Ovary (tissue), 10 donors: ENCODE measurements at regions of chr10 and their contacts with region 1.

Region 1: GRCh38 chr10:21849607-21850006 is 153.9 kb downstream of the DNAJC1 start:
- DNase-seq: no peak
- H3K4me3 ChIP-seq: no peak overlapping the region
- H3K27ac ChIP-seq: no peak overlapping the region
- H3K4me1 ChIP-seq: no peaks in the 10 kb centered on the region
- H3K27me3 ChIP-seq: no peaks in the 10 kb centered on the region
- CTCF ChIP-seq: no peak
- EP300 ChIP-seq: no peak
- POLR2A ChIP-seq: no peak

Region 2: GRCh38 chr10:21702633-21703111 is 146.9 kb before region 1 on chr10:
- intact Hi-C with region 1: no loop called
- DNase-seq: no peak
- H3K4me3 ChIP-seq: no peak overlapping the region
- H3K27ac ChIP-seq: no peak overlapping the region
- H3K4me1 ChIP-seq: no peaks in the 10 kb centered on the region
- H3K27me3 ChIP-seq: no peaks in the 10 kb centered on the region
- CTCF ChIP-seq: no peak
- EP300 ChIP-seq: no peak
- POLR2A ChIP-seq: no peak

Region 3: DNA sequence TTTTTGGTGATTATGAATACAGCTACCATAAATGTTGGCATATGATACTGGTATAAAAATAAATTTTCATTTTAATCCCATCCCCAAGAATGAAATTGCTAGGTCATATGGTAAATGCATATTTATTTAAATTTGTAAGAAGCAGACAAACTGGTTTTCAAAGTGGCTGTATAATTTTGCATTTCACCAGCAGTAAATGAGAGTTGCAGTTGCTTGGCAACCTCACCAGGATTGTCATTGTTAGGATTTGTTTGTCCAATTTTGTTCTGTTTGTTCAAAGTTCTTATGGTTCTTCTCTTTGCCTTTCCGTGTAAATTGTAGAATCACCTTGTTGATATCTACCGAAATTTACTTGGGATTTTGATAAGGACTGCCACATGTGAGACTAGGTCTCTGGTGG is 1826.7 kb after region 1 on chr10:
- intact Hi-C with region 1: loop called in 1 of 4 experiments (anchors 5 kb)
- DNase-seq: no peak
- H3K4me3 ChIP-seq: no peak overlapping the region
- H3K27ac ChIP-seq: no peak overlapping the region
- H3K4me1 ChIP-seq: no peaks in the 10 kb centered on the region
- H3K27me3 ChIP-seq: no peaks in the 10 kb centered on the region
- CTCF ChIP-seq: no peak
- EP300 ChIP-seq: no peak
- POLR2A ChIP-seq: no peak